PC-9 (cell line): ENCODE measurements at regions of chr19 and their contacts with region 1.

Region 1: DNA sequence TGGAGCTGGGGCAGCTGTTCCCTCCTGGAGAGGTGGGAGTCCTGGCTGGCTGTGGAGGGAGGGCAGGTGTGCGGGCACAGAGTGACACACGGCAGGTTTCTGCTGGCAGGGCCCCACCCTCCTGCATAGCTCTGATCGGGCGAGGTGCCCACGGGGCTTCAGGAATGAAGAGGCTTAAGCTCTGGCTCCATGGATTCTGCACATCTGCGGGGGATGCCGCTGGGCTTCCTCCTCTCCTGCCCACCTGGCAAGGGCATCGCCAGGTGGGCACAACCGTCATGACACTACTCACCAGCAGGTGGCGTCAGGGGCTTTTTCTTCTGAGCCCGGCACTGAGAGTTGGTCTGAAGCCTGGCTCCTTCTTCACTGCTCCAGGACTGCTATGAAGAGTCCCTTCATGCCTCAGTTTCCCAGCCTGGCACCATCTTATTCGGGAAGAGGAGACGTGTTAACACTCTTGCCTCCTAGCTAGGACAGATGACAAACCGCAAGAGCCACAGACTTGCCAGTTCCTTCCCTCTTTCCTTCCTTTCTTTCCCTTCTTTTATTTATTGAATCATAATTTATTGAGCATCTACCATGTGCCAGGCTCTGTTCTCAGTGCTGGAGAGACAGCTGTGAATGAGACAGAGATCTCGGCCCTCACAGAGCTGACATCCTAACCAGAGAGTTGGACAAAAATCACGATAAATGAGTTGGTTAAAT is 15.2 kb upstream of the PAK4 start:
- DNase-seq: peak; percentile 42 to 65
- H3K4me3 ChIP-seq: no peak overlapping the region
- H3K27ac ChIP-seq: peak overlapping the region; percentile 88
- H3K4me1 ChIP-seq: peaks cover 23% of the 10 kb centered on the region
- H3K27me3 ChIP-seq: no peaks in the 10 kb centered on the region
- CTCF ChIP-seq: peak; percentile 90

Region 2: GRCh38 chr19:38769635-38770211 is 340.7 kb before region 1 on chr19:
- CTCF ChIA-PET with region 1: no interaction called
- POLR2A ChIA-PET with region 1: no interaction called
- intact Hi-C with region 1: no loop called
- DNase-seq: peak in 1 of 2 experiments; percentile 69
- H3K4me3 ChIP-seq: no peak overlapping the region
- H3K27ac ChIP-seq: no peak overlapping the region
- H3K4me1 ChIP-seq: no peaks in the 10 kb centered on the region
- H3K27me3 ChIP-seq: no peaks in the 10 kb centered on the region
- CTCF ChIP-seq: peak; percentile 80

Region 3: GRCh38 chr19:39078436-39079200 is 31.8 kb before region 1 on chr19:
- CTCF ChIA-PET with region 1: no interaction called
- POLR2A ChIA-PET with region 1: no interaction called
- intact Hi-C with region 1: loop called (anchors 2 kb)
- DNase-seq: peak; percentile 65 to 98
- H3K4me3 ChIP-seq: no peak overlapping the region
- H3K27ac ChIP-seq: peak overlapping the region; percentile 92
- H3K4me1 ChIP-seq: peaks cover 50% of the 10 kb centered on the region
- H3K27me3 ChIP-seq: no peaks in the 10 kb centered on the region
- CTCF ChIP-seq: no peak

Region 4: DNA sequence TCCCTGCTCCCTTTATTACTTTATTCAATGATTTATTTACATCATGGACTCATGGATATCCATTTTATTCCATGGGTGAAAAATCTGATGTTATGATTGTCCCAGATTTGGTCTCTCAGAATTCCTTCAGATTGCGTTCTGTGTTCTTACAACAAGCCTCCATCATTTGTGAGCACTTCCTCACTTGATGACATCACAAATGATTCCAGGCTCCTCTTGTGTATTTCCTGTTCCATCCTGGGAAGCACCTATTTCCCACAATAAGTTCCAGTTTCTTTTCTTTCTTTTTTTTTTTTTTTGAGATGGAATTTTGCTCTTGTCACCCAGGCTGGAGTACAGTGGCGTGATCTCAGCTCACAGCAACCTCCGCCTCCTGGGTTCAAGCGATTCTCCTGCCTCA is 19.5 kb before region 1 on chr19:
- CTCF ChIA-PET with region 1: interaction called, 15 read pairs
- POLR2A ChIA-PET with region 1: no interaction called
- intact Hi-C with region 1: no loop called
- DNase-seq: no peak
- H3K4me3 ChIP-seq: no peak overlapping the region
- H3K27ac ChIP-seq: no peak overlapping the region
- H3K4me1 ChIP-seq: no peaks in the 10 kb centered on the region
- H3K27me3 ChIP-seq: no peaks in the 10 kb centered on the region
- CTCF ChIP-seq: no peak